ENCODE measurements at regions of chr17 and their contacts with region 1.

Region 1: GRCh38 chr17:82098072-82098821 is at the start of gene FASN:
- DNase-seq: peak; percentile 74 to 93 (median 90)
- ATAC-seq: peak; percentile 74 to 84
- H3K4me3 Mint-ChIP-seq: peak within 1 kb of the TSS; percentile 22 to 82 (median 64)
- H3K27ac Mint-ChIP-seq: peak within 1 kb of the TSS in 5 of 10 donors; percentile 52 to 87 (median 71)
- H3K4me1 Mint-ChIP-seq: peaks cover 2 to 27% (median 12%) of the 10 kb centered on the region in 4 donors
- H3K27me3 Mint-ChIP-seq: no peaks in the 10 kb centered on the region
- polyA plus RNA-seq, gene FASN: 0.33 to 2.4 (median 0.80) TPM

Region 2: DNA sequence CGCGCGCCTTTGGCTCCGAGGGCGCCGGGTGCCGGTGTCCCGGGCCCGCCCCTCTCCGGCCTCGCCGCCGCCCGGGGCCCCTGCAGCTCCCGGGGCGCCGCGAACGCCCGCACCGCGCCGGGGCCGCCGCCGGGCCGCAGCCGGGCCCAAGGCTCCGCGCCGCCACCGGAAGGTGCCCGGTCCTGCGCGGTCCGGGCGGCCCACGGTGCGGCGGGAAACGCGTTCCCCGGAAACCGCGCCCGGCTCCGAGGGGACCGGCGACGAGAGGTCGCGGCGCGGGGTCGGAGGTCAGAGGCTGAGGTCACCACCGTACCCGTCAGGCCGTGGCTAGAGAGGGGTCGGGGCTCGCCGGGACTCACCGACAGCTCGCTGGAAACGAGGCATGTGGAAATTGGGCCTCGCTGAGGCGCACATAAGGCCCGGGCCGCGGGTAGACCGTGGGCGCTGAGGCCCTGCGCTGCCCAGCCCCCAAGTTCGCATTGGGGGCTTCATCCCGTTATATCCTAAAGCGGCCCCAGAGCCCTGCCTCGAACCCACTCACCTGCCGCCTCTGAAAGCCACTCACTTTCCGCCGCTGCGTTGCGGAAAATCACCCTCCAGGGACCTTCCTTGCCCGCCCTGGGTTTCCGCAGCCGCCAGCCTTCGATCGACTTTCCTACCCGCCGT is 32.5 kb before region 1 on chr17 and contains the start of gene DUS1L:
- POLR2A ChIA-PET with region 1: interaction called, 11 read pairs
- DNase-seq: peak; percentile 44 to 78 (median 69)
- ATAC-seq: peak; percentile 86 to 88
- H3K4me3 Mint-ChIP-seq: peak within 1 kb of the TSS; percentile 76 to 88 (median 84)
- H3K27ac Mint-ChIP-seq: peak within 1 kb of the TSS; percentile 81 to 97 (median 92)
- H3K4me1 Mint-ChIP-seq: peaks cover 0 to 29% (median 12%) of the 10 kb centered on the region in 4 donors
- H3K27me3 Mint-ChIP-seq: no peaks in the 10 kb centered on the region
- polyA plus RNA-seq, gene DUS1L: 68.6 to 167 (median 92.1) TPM

Region 3: GRCh38 chr17:82086941-82087906 is 11.0 kb before region 1 on chr17:
- POLR2A ChIA-PET with region 1: no interaction called
- DNase-seq: peak in 2 of 10 donors; percentile 6 to 40
- ATAC-seq: no peak
- H3K4me3 Mint-ChIP-seq: no peak overlapping the region
- H3K27ac Mint-ChIP-seq: no peak overlapping the region
- H3K4me1 Mint-ChIP-seq: no peaks in the 10 kb centered on the region
- H3K27me3 Mint-ChIP-seq: no peaks in the 10 kb centered on the region

Measured in naive thymus-derived CD8-positive, alpha-beta T cell (primary cell).